ENCODE measurements at regions of chr14 and their contacts with region 1.

Region 1: GRCh38 chr14:50860478-50861086 is 11.3 kb upstream of the ABHD12B start:
- DNase-seq: peak; percentile 80 to 94 (median 88)
- ATAC-seq: peak; percentile 75 to 81
- H3K4me3 Mint-ChIP-seq: peak overlapping the region; percentile 89 to 96 (median 93)
- H3K27ac Mint-ChIP-seq: peak overlapping the region; percentile 77 to 97 (median 93)
- H3K4me1 Mint-ChIP-seq: peaks cover 0 to 9% (median 5%) of the 10 kb centered on the region in 4 donors
- H3K27me3 Mint-ChIP-seq: peaks cover 0 to 6% (median 3%) of the 10 kb centered on the region in 5 donors

Region 2: DNA sequence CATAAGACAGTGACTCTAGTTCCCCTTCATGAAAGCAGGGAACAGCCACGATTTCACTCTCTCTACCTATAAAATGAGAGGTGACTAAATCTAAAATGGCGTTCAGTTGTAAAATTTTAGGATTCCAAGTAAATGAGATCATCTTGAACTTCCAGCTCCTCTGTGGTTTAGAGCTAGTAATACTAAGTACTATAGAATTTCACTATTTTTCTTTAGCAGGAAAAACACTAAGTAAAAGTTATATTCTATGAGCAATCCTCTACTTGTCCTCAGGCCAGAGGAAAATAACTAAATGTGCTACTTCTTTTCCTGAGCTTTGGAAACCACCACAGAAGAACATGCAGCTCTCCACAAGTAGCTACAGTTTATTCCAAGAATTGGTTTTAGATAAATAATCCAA is 85.2 kb before region 1 on chr14:
- POLR2A ChIA-PET with region 1: interaction called, 27 read pairs
- DNase-seq: no peak
- ATAC-seq: no peak
- H3K4me3 Mint-ChIP-seq: no peak overlapping the region
- H3K27ac Mint-ChIP-seq: peak overlapping the region in 1 of 10 donors; percentile 7
- H3K4me1 Mint-ChIP-seq: peaks cover 15 to 37% (median 32%) of the 10 kb centered on the region in 4 donors
- H3K27me3 Mint-ChIP-seq: no peaks in the 10 kb centered on the region

Region 3: DNA sequence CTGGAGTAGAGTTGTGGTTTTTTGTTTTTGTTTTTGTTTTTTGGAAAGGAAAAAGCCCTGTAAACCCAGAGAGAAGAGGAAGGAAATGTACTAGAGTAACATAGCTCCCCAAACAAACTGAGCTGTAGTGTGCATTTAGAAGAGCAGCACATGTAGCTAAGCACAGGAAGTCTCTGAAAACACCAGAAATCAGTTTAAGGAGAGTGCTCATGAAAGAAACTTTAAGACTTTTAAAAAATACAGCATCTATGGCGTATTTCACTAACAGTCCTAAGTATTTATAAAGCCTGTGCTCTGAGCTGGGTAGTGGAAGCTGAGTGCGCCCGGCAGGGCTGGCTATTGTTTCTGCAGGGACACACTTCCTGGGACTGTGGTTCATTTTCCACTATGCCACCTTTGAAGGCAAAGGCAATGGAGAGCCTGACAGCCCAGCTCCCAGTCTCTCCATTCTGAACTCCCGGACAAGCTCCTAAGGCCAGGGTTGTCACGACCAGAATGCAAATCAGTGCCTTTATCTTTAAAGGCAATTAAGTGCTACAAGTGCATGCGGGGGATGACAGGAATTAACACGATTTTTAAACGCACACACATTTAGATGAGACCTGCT is 75.0 kb before region 1 on chr14:
- POLR2A ChIA-PET with region 1: interaction called, 53 read pairs
- DNase-seq: peak in 2 of 10 donors; percentile 39 to 44
- ATAC-seq: peak; percentile 64 to 72
- H3K4me3 Mint-ChIP-seq: peak overlapping the region; percentile 50 to 85 (median 63)
- H3K27ac Mint-ChIP-seq: peak overlapping the region; percentile 89 to 98 (median 96)
- H3K4me1 Mint-ChIP-seq: peaks cover 43 to 96% (median 85%) of the 10 kb centered on the region in 4 donors
- H3K27me3 Mint-ChIP-seq: no peaks in the 10 kb centered on the region

Region 4: DNA sequence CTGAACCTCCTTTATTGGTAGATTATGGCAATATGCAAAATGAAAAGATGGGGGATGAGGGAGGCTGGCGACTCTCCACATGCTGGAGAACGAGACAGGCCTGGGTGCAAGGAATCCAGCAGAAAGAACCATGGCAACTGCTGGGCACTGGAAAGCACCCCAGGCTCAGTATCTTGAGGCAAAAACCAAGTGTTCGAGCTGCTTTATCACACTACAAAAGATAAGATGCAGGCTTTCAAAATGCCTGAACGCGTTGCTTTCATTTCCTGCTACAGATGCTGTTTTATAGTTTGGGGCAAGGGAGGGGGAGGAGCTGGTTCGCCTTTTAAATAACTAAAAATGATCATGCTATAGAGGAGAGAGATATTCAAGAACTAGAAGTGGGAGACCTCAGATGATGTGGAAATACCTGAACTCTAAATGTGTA is 68.5 kb before region 1 on chr14:
- POLR2A ChIA-PET with region 1: interaction called, 53 read pairs
- DNase-seq: peak in 5 of 10 donors; percentile 12 to 55 (median 46)
- ATAC-seq: peak; percentile 70
- H3K4me3 Mint-ChIP-seq: peak overlapping the region; percentile 68 to 88 (median 82)
- H3K27ac Mint-ChIP-seq: peak overlapping the region; percentile 88 to 99 (median 98)
- H3K4me1 Mint-ChIP-seq: peaks cover 45 to 99% (median 88%) of the 10 kb centered on the region in 4 donors
- H3K27me3 Mint-ChIP-seq: no peaks in the 10 kb centered on the region

Region 5: DNA sequence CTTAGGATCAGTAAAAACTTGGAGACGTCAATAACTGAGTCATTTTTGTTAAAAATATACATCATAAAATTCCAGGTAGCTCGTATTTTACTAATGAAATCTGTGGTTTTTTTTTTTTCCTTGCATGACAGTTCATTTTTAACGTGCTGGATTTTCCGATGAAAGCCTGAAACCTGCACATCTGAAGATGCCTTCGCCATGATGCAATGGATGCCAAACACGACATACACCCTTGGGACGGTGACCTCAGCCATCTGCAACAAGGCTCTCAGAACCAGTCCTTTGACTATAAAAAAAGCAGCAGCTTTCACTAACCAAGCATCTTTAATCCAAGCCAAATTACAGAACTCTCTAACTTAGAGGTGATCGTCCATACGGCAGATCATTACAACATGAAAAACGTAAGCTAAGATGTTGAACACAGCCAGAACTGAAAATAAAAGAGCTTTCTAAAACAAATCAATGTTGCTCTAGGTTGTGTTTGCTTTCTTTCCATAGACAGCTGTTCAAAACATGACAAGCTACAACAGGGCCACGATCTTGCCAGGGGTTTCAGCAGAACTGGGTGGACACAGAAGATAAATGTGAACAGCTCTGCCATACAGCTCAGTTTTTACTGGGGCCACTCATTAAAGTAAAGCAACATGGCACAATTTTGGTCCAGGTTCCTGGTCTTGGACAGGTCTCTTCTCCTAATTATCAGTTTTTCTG is 37.4 kb before region 1 on chr14:
- POLR2A ChIA-PET with region 1: interaction called, 12 read pairs
- DNase-seq: peak in 1 of 10 donors; percentile 23
- ATAC-seq: peak; percentile 7 to 21
- H3K4me3 Mint-ChIP-seq: peak overlapping the region; percentile 62 to 87 (median 84)
- H3K27ac Mint-ChIP-seq: peak overlapping the region; percentile 87 to 97 (median 95)
- H3K4me1 Mint-ChIP-seq: peaks cover 56 to 97% (median 90%) of the 10 kb centered on the region in 4 donors
- H3K27me3 Mint-ChIP-seq: no peaks in the 10 kb centered on the region

Region 6: DNA sequence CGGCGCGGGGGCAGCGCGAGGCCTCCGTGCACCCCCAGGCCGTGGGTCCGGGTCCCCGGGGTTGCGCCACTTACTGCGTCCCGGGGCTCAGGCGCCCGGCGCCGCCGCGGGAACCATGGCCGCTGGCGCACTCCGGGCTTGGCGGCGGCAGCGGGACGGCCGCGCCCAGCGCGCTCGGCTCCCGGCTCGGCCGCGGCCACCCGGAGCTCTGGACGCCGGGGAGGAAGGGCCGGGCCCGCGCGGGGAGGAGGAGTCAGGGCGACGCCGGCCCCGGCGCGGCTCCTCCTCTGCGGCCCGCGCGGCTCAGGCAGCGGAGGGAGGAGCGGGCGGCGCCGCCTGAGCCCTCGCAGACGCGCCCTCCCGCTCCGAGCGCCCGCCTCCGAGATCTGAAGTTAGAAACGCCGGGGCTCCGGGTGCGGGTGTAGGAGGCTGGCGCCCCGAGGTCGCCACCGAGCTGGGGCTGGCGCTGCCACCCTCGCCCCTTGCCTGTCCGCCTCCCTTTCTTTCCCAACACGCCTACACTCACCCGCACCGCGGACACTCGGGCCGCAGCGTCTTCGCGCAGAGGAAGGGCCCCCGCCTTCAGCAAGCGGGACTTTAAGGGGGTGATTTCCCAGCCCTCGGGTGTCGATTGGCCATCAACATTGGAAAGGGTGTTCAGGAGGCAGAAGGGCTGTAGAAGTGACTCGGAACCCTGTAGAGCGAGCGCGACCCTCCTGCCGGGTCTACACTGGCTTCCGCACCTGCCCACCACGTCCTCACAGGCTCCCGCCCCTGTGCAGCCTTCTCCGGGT is 29.5 kb before region 1 on chr14 and contains the start of gene NIN:
- POLR2A ChIA-PET with region 1: interaction called, 70 read pairs
- DNase-seq: peak; percentile 63 to 83 (median 72)
- ATAC-seq: peak; percentile 77 to 81
- H3K4me3 Mint-ChIP-seq: peak within 1 kb of the TSS; percentile 89 to 99 (median 98)
- H3K27ac Mint-ChIP-seq: peak within 1 kb of the TSS; percentile 95 to 99 (median 98)
- H3K4me1 Mint-ChIP-seq: peaks cover 40 to 80% (median 70%) of the 10 kb centered on the region in 4 donors
- H3K27me3 Mint-ChIP-seq: no peaks in the 10 kb centered on the region
- polyA plus RNA-seq, gene NIN: 37.1 to 60.2 (median 42.7) TPM